HCT116 (cell line): ENCODE measurements at regions of chr1 and their contacts with region 1.

Region 1: DNA sequence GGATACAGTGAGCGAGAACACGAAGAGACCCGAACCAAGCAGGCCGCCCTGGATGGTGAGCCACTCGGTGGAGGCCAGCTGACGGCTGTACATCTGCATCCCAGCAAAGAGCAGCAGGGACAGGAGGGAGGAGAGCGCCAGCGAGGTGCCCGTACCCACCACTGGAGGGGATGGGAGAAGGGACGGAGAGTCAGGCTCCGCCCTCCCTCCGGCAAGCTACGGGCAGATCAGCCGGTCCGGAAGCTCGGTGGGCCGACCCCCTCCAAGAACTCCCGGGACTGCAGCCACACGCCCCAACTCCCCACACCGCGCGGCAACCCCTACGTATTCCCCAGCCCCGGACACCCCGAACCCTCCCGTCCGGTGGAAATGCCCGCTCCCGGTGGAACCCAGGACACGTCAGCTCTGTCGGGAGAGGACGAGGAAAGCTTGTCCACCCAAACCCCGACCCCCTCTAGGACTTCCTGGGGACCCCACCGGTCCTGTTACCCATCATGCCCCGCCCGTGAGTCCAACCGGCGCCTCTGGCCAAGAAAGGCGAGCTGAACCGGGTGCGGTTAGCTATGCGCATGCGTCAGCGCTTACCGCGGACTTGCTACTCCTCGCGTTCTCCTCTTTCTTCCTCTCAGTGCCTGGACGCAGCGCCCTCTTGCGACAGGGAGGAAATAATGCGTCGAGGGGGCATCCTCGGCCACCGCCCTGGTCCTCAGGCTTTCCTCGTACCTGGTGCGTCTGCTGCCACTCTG is at the start of gene KRTCAP2:
- DNase-seq: peak; percentile 91
- ATAC-seq: peak; percentile 76
- H3K4me3 ChIP-seq: peak within 1 kb of the TSS; percentile 84 to 97
- H3K27ac ChIP-seq: peak within 1 kb of the TSS; percentile 76
- H3K4me1 ChIP-seq: peaks cover 7 to 45% of the 10 kb centered on the region in 2 experiments; a peak in 3 of 4 replicates
- H3K27me3 ChIP-seq: no peaks in the 10 kb centered on the region
- CTCF ChIP-seq: peak in 2 of 3 experiments; percentile 90 to 92; a peak in 4 of 6 replicates
- POLR2A ChIP-seq: peak; percentile 48
- RAD21 ChIP-seq: no peak
- total RNA-seq, gene KRTCAP2: 143 TPM

Region 2: GRCh38 chr1:155091071-155091709 is 81.7 kb before region 1 on chr1:
- CTCF ChIA-PET with region 1: interaction called, 163 read pairs
- POLR2A ChIA-PET with region 1: interaction called, 9 read pairs
- RAD21 ChIA-PET with region 1: interaction called, 23 to 35 read pairs
- intact Hi-C with region 1: no loop called
- DNase-seq: peak; percentile 61
- ATAC-seq: peak; percentile 80
- H3K4me3 ChIP-seq: peak overlapping the region; percentile 22 to 33; a peak in 3 of 4 replicates
- H3K27ac ChIP-seq: no peak overlapping the region
- H3K4me1 ChIP-seq: peaks cover 15 to 37% of the 10 kb centered on the region in 2 experiments; a peak in 3 of 4 replicates
- H3K27me3 ChIP-seq: no peaks in the 10 kb centered on the region
- CTCF ChIP-seq: peak in 2 of 3 experiments; percentile 95 to 98; a peak in 4 of 6 replicates
- POLR2A ChIP-seq: no peak
- RAD21 ChIP-seq: no peak

Region 3: DNA sequence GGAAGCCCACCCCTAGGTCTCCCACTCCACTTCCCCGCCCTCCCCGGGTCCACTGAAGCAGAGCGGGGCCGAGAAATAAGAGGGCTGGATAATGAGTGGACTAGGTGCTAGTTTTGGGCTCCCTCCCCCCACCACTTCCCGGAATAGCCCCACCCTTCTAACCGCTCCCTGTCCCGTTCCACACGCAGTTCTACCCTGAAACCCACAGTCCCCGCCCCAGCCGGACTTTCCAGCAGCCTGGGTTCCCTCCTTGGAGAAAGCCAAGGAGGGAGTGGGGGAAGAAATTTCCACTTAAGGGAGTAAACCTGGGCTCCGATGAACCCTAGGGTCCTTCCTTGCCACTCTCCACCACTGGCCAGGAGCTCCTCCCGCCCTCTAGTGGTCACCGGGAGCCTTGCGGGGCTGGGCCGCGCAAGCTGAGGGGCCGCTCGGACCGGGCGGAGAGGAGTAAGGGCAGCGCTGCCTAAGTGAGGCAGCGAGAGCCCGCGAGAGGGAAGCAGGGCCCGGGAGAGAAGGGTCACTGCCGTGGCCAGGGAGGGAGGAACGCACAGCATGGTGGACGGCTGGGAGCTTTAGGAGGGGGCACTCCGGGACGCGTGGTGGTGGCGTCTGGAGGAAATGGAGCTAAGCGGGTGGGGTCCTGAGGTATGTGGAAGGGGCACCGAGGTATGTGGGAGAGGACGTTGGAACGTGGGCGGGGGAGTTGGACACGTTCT is 20.5 kb after region 1 on chr1:
- CTCF ChIA-PET with region 1: interaction called, 71 read pairs
- POLR2A ChIA-PET with region 1: interaction called, 15 read pairs
- RAD21 ChIA-PET with region 1: interaction called in 1 of 2 experiments, 3 read pairs
- intact Hi-C with region 1: no loop called
- DNase-seq: peak; percentile 79
- ATAC-seq: peak; percentile 78
- H3K4me3 ChIP-seq: peak overlapping the region; percentile 65 to 66
- H3K27ac ChIP-seq: peak overlapping the region; percentile 97
- H3K4me1 ChIP-seq: peaks cover 15 to 36% of the 10 kb centered on the region in 2 experiments; a peak in 3 of 4 replicates
- H3K27me3 ChIP-seq: no peaks in the 10 kb centered on the region
- CTCF ChIP-seq: peak in 2 of 3 experiments; percentile 97 to 99; a peak in 4 of 6 replicates
- POLR2A ChIP-seq: peak; percentile 30
- RAD21 ChIP-seq: no peak

Region 4: DNA sequence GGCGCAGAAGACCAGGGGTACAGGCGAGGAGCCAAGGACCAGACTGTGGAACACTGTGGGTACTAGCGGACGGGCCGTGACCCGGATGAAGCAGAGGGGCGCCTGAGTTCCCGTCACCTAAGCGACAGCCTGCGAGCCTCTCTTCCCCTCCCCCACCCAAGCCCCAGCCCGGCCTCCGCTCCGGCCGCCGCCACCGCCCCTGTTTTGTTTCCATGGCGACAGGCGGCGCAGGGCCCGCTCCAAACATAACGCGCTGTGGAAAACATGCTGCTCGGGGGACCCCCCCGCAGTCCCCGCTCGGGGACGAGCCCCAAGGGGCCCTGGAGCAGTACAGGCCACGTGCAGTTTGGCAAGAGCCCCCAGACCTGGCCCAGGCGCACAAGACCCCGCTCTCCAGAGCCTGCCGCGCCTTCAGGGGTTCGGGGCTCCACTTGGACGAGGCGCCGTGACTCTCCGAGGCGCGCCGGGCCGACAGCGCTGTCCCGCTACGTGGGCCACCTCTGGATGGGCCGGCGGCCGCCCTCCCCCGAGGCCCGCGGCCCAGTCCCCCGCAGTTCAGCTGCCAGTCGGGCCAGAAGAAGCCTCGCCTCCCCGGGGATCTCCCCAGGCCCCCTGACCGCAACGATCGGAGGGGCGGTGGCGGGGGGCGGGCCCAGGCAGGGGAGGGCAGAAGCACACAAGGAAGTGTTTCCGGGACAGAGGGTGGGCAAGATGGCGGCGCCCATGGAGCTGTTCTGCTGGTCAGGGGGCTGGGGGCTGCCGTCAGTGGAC is 35.8 kb after region 1 on chr1 and contains the start of gene MTX1:
- CTCF ChIA-PET with region 1: interaction called, 13 read pairs
- POLR2A ChIA-PET with region 1: no interaction called
- RAD21 ChIA-PET with region 1: no interaction called
- intact Hi-C with region 1: no loop called
- DNase-seq: no peak
- ATAC-seq: peak; percentile 76
- H3K4me3 ChIP-seq: peak within 1 kb of the TSS; percentile 89 to 100
- H3K27ac ChIP-seq: peak within 1 kb of the TSS; percentile 90
- H3K4me1 ChIP-seq: peaks cover 22 to 33% of the 10 kb centered on the region in 2 experiments
- H3K27me3 ChIP-seq: no peaks in the 10 kb centered on the region
- CTCF ChIP-seq: no peak
- POLR2A ChIP-seq: no peak
- RAD21 ChIP-seq: no peak
- total RNA-seq, gene MTX1: 69.1 TPM

Region 5: DNA sequence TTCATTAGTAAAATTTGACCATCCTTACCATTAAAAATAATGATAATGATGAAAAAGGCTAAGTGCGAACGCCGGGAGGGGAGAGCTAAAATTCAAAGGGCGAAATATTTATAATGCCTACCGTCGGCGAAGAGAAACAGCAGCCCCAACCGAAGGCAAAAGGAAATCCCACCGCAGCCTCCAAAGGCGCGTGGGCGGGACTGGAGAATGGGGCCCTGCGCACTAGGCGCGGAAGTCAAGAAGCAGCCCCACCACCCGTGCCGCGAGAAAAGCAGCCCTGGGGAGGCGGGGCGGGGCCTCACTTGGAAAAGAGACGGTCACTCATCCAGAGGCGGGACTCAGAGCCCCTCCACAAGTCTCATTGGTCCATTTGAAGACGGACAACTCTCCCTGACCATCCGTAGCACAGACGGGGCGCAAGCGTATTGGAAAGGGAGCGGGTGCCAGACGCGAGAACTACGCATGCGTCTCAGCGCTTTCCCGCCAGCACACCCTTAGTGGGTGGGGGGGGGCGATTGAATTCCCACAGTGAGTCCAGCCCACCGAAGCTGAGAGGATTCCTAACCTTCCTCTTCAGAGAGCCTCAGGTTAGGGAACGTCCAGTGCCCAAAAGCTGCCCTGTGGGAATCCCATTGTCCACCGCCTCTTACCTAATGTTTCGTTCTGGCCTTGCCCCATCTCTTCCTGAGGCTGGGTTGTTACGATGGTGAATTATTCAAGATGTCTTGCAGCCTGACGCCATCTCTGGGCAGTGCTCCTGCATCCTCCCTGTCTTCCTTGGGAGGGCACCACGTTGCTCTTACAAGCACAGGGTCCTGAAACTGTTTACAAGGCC is 54.6 kb after region 1 on chr1:
- CTCF ChIA-PET with region 1: interaction called, 9 read pairs
- POLR2A ChIA-PET with region 1: interaction called, 4 read pairs
- RAD21 ChIA-PET with region 1: no interaction called
- intact Hi-C with region 1: loop called (anchors 1 kb)
- DNase-seq: peak; percentile 97
- ATAC-seq: peak; percentile 95
- H3K4me3 ChIP-seq: peak overlapping the region; percentile 63 to 69
- H3K27ac ChIP-seq: peak overlapping the region; percentile 95
- H3K4me1 ChIP-seq: peaks cover 17 to 43% of the 10 kb centered on the region in 2 experiments
- H3K27me3 ChIP-seq: no peaks in the 10 kb centered on the region
- CTCF ChIP-seq: no peak
- POLR2A ChIP-seq: peak; percentile 91
- RAD21 ChIP-seq: no peak

Region 6: GRCh38 chr1:155323798-155324610 is 151.1 kb after region 1 on chr1:
- CTCF ChIA-PET with region 1: interaction called, 5 read pairs
- POLR2A ChIA-PET with region 1: no interaction called
- RAD21 ChIA-PET with region 1: no interaction called
- intact Hi-C with region 1: loop called (anchors 10 kb)
- DNase-seq: peak; percentile 89
- ATAC-seq: peak; percentile 77
- H3K4me3 ChIP-seq: peak overlapping the region; percentile 83 to 96
- H3K27ac ChIP-seq: peak overlapping the region; percentile 96
- H3K4me1 ChIP-seq: peaks cover 15 to 25% of the 10 kb centered on the region in 2 experiments
- H3K27me3 ChIP-seq: no peaks in the 10 kb centered on the region
- CTCF ChIP-seq: no peak
- POLR2A ChIP-seq: peak; percentile 85
- RAD21 ChIP-seq: no peak

Region 7: DNA sequence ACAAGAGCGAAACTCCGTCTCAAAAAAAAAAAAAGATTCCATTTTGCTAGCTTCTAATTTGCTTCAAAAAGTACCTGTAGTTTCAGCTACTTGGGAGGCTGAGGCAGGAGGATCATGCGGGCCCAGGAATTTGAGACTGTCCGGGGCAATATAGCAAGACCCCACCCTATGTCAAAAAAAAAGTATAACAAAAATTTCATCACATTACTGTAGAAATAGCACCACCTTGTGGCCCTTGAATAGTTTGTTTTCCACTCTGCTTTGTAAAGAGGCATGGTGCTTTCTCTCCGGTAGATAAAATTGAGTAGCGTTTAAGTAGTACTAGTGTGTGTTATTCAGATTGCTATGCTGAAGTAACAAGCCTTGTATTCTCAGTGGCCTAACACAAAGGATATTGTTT is 418.9 kb after region 1 on chr1:
- CTCF ChIA-PET with region 1: no interaction called
- POLR2A ChIA-PET with region 1: no interaction called
- RAD21 ChIA-PET with region 1: no interaction called
- intact Hi-C with region 1: loop called (anchors 2 kb)
- DNase-seq: peak; percentile 70
- ATAC-seq: peak; percentile 83
- H3K4me3 ChIP-seq: no peak overlapping the region
- H3K27ac ChIP-seq: no peak overlapping the region
- H3K4me1 ChIP-seq: no peaks in the 10 kb centered on the region
- H3K27me3 ChIP-seq: no peaks in the 10 kb centered on the region
- CTCF ChIP-seq: peak; percentile 40 to 84 (median 59)
- POLR2A ChIP-seq: no peak
- RAD21 ChIP-seq: peak; percentile 84